Naive thymus-derived CD4-positive, alpha-beta T cell (primary cell): ENCODE measurements at regions of chrX and their contacts with region 1.

Region 1: GRCh38 chrX:3651276-3651675 is 62.2 kb downstream of the PRKX start:
- DNase-seq: peak in 6 of 9 donors; percentile 3 to 39 (median 29)
- ATAC-seq: peak; percentile 53
- H3K4me3 ChIP-seq: no peak overlapping the region
- H3K4me3 Mint-ChIP-seq: no peak overlapping the region
- H3K27ac ChIP-seq: no peak overlapping the region
- H3K27ac Mint-ChIP-seq: peak overlapping the region in 1 of 9 donors; percentile 61
- H3K4me1 ChIP-seq: no peaks in the 10 kb centered on the region
- H3K4me1 Mint-ChIP-seq: peaks cover 0 to 6% (median 1%) of the 10 kb centered on the region in 7 donors
- H3K27me3 ChIP-seq: no peaks in the 10 kb centered on the region
- H3K27me3 Mint-ChIP-seq: no peaks in the 10 kb centered on the region

Region 2: GRCh38 chrX:3697701-3698279 is 46.5 kb after region 1 on chrX:
- CTCF ChIA-PET with region 1: interaction called, 3 read pairs
- POLR2A ChIA-PET with region 1: no interaction called
- intact Hi-C with region 1: loop called in 1 of 2 experiments (anchors 5 kb)
- DNase-seq: no peak
- ATAC-seq: no peak
- H3K4me3 ChIP-seq: no peak overlapping the region
- H3K4me3 Mint-ChIP-seq: peak overlapping the region in 3 of 10 donors; percentile 28 to 51 (median 38)
- H3K27ac ChIP-seq: no peak overlapping the region
- H3K27ac Mint-ChIP-seq: peak overlapping the region in 6 of 9 donors; percentile 21 to 78 (median 36)
- H3K4me1 ChIP-seq: peaks cover 0 to 4% of the 10 kb centered on the region in 2 donors
- H3K4me1 Mint-ChIP-seq: peaks cover 28 to 80% (median 56%) of the 10 kb centered on the region in 7 donors
- H3K27me3 ChIP-seq: no peaks in the 10 kb centered on the region
- H3K27me3 Mint-ChIP-seq: no peaks in the 10 kb centered on the region

Region 3: DNA sequence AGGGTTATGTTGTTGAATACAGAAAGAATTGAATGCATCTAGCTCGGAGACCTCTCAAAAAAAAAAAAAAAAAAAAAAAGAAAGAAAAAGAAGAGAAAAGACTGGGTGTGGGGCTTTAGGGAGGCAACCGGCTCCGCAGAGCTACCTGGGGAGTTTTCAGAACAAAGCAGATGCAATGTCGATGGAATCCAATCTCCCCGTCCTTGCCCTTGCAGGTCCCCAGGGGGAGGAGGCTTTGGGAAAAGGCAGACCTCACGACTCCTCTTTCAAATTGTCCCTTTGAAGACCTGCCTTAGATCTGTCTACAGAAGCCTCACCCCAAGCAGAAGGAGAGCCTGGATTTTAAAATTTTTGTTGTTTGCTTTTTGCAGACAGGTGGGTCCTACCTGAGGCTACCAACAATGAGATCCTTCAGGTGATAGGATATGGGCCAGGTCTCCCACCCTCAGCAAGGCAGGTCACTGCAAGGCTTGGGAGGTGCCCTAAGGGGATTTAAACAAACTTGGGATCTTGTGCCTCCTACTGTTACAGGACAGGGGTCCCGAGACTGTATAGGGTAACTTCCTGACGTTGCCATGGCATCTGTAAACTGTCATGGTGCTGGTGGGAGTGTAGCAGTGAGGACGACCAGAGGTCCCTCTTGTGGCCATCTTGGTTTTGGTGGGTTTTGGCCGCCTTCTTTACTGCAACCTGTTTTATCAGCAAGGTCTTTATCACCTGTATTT is 137.4 kb after region 1 on chrX:
- CTCF ChIA-PET with region 1: interaction called, 3 read pairs
- POLR2A ChIA-PET with region 1: no interaction called
- intact Hi-C with region 1: loop called (anchors 1 to 5 kb)
- DNase-seq: peak in 4 of 9 donors; percentile 3 to 21 (median 12)
- ATAC-seq: no peak
- H3K4me3 ChIP-seq: no peak overlapping the region
- H3K4me3 Mint-ChIP-seq: peak overlapping the region in 2 of 10 donors; percentile 8 to 22
- H3K27ac ChIP-seq: no peak overlapping the region
- H3K27ac Mint-ChIP-seq: peak overlapping the region in 1 of 9 donors; percentile 36
- H3K4me1 ChIP-seq: no peaks in the 10 kb centered on the region
- H3K4me1 Mint-ChIP-seq: peaks cover 0 to 16% (median 6%) of the 10 kb centered on the region in 7 donors
- H3K27me3 ChIP-seq: no peaks in the 10 kb centered on the region
- H3K27me3 Mint-ChIP-seq: peaks cover 0 to 20% (median 3%) of the 10 kb centered on the region in 5 donors

Region 4: DNA sequence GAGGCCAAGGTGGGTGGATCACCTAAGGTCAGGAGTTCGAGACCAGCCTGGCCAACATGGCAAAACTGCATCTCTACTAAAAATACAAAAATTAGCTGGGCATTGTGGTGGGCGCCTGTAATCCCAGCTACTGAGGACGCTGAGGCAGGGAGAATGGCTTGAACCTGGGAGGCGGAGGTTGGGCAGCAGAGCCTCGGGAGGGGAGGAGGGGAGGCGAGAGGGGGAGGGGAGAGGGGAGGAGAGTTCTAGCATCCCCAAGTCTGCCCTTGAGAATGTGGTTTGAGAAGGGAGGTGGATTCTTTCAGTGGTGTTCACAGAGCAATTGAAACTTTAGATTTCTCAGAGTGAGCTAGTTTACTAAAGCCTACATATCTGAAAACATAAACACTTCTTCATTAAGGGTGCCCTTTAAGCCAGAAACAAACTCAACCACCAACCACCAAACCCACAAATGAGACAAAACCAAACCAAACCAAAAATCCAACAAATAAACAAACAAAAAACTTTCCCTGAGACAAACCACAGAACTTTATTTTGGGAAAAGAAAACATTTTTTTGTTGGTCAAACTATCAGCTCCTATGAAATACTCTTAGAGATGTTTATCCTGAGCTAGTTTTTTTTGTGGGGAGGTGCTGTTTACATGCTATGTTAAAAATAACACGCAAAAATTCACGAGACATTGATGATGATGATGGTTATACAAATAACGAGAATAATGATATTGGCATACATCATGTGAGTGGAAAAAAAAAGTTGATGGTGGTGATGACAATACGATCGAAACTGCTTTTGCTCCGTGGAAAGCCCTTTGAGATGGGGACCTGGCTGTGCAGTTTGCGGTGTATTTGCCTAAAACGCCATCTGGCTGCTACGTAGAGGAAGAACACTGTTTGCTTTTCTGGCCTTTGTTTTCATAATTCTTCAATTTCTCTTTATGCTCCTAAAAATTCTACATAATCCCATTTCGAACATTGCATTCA is 160.3 kb after region 1 on chrX:
- CTCF ChIA-PET with region 1: interaction called, 10 read pairs
- POLR2A ChIA-PET with region 1: interaction called, 4 read pairs
- intact Hi-C with region 1: loop called (anchors 1 kb)
- DNase-seq: peak in 7 of 9 donors; percentile 35 to 71 (median 59)
- ATAC-seq: no peak
- H3K4me3 ChIP-seq: peak overlapping the region; percentile 34
- H3K4me3 Mint-ChIP-seq: peak overlapping the region in 9 of 10 donors; percentile 35 to 83 (median 57)
- H3K27ac ChIP-seq: no peak overlapping the region
- H3K27ac Mint-ChIP-seq: peak overlapping the region in 5 of 9 donors; percentile 4 to 79 (median 71)
- H3K4me1 ChIP-seq: no peaks in the 10 kb centered on the region
- H3K4me1 Mint-ChIP-seq: peaks cover 0 to 30% (median 9%) of the 10 kb centered on the region in 7 donors
- H3K27me3 ChIP-seq: no peaks in the 10 kb centered on the region
- H3K27me3 Mint-ChIP-seq: peaks cover 5 to 29% (median 10%) of the 10 kb centered on the region in 5 donors